ENCODE measurements at regions of chr19 and their contacts with region 1.

Region 1: GRCh38 chr19:58261968-58262921 is 16.5 kb upstream of the ZNF8 start:
- DNase-seq: no peak
- ATAC-seq: no peak
- H3K4me3 ChIP-seq: no peak overlapping the region
- H3K27ac ChIP-seq: no peak overlapping the region
- H3K4me1 ChIP-seq: no peaks in the 10 kb centered on the region
- H3K27me3 ChIP-seq: no peaks in the 10 kb centered on the region
- CTCF ChIP-seq: no peak

Region 2: GRCh38 chr19:58128041-58128685 is 134.1 kb before region 1 on chr19:
- intact Hi-C with region 1: loop called in 1 of 3 experiments (anchors 10 kb)
- DNase-seq: no peak
- ATAC-seq: no peak
- H3K4me3 ChIP-seq: no peak overlapping the region
- H3K27ac ChIP-seq: no peak overlapping the region
- H3K4me1 ChIP-seq: no peaks in the 10 kb centered on the region
- H3K27me3 ChIP-seq: no peaks in the 10 kb centered on the region
- CTCF ChIP-seq: no peak

Region 3: DNA sequence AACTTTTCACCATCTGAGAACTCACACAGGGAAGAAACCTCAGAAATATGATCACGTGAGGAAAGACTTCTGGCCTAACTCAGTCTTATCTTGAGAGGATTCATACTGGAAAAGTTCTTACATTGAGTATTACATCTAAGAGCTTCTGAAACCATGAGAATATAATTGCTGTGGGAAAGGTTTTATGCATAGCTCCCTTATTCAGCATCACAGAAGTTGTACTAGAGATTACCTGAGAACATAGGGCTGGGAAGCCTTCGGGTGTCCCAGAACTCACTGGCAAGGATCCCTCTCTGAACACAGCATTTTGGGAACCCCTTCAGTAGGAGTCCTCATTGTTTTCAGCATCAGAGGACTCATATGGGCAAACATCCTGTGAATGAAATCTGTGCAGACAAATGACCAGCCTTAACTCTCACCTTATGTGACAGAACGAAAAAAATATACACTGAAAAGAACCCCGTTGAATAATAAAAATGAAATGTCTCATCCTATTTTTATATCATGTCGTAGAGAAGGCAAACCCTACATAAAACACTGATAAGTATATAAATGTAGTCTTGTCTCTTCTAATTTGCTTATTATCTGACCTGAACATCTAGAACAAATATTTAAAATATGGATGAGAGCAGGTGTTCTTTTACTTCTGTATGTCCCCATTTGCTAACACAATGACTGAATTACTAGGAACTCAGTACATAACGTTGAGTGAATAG is 65.2 kb before region 1 on chr19:
- intact Hi-C with region 1: loop called in 2 of 3 experiments (anchors 10 kb)
- DNase-seq: no peak
- ATAC-seq: no peak
- H3K4me3 ChIP-seq: no peak overlapping the region
- H3K27ac ChIP-seq: no peak overlapping the region
- H3K4me1 ChIP-seq: no peaks in the 10 kb centered on the region
- H3K27me3 ChIP-seq: no peaks in the 10 kb centered on the region
- CTCF ChIP-seq: no peak

Region 4: DNA sequence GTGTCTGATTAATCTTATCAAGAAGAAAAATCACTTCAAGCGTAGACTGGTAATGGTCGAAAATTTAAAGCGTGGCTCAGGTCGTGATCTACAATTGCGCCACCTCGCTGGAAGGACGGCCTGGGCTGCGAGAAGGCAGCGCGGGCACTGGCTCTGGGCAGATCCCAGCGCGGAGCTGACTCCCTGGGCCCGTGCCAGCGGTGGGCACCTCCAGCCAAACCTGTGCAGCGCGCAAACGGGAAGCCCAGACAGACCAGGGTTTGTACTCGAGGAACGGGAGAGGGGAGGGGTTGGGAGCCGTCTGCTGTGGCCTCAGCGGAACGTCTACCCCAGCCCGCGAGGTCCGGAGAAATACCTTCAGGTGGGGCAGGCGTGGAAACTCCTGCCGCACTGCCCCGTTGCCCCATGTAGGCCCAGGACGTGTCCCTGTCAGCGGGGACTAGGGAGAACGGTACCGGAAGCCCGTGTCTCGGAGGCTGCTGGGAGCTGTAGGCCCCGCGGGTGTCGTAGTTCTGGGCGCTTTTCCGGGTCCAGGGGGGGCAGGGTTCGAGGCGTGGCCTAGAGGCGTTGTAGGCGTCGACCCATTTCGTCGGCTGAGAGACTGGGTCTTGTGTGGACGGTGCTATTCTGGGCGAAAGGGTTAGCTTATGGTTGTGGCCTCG is 58.3 kb before region 1 on chr19:
- intact Hi-C with region 1: loop called in 2 of 3 experiments (anchors 10 kb)
- DNase-seq: peak in 1 of 6 donors; percentile 42
- ATAC-seq: no peak
- H3K4me3 ChIP-seq: no peak overlapping the region
- H3K27ac ChIP-seq: no peak overlapping the region
- H3K4me1 ChIP-seq: no peaks in the 10 kb centered on the region
- H3K27me3 ChIP-seq: no peaks in the 10 kb centered on the region
- CTCF ChIP-seq: no peak

Region 5: GRCh38 chr19:58305065-58305931 is 43.1 kb after region 1 on chr19 and contains the start of gene ERVK3-1:
- intact Hi-C with region 1: no loop called
- DNase-seq: peak; percentile 92 to 98 (median 94)
- ATAC-seq: peak; percentile 99 to 100 (median 100)
- H3K4me3 ChIP-seq: peak within 1 kb of the TSS; percentile 67 to 97 (median 92)
- H3K27ac ChIP-seq: peak within 1 kb of the TSS; percentile 53 to 75 (median 66)
- H3K4me1 ChIP-seq: peaks cover 0 to 11% (median 0%) of the 10 kb centered on the region in 3 donors
- H3K27me3 ChIP-seq: no peaks in the 10 kb centered on the region
- CTCF ChIP-seq: peak in 2 of 4 donors; percentile 11 to 26
- total RNA-seq, gene ERVK3-1: 8.6 to 17.6 (median 14.0) TPM

Measured in pancreas (tissue), 10 donors.